Transverse colon (tissue), 4 donors: ENCODE measurements at regions of chr12 and their contacts with region 1.

Region 1: DNA sequence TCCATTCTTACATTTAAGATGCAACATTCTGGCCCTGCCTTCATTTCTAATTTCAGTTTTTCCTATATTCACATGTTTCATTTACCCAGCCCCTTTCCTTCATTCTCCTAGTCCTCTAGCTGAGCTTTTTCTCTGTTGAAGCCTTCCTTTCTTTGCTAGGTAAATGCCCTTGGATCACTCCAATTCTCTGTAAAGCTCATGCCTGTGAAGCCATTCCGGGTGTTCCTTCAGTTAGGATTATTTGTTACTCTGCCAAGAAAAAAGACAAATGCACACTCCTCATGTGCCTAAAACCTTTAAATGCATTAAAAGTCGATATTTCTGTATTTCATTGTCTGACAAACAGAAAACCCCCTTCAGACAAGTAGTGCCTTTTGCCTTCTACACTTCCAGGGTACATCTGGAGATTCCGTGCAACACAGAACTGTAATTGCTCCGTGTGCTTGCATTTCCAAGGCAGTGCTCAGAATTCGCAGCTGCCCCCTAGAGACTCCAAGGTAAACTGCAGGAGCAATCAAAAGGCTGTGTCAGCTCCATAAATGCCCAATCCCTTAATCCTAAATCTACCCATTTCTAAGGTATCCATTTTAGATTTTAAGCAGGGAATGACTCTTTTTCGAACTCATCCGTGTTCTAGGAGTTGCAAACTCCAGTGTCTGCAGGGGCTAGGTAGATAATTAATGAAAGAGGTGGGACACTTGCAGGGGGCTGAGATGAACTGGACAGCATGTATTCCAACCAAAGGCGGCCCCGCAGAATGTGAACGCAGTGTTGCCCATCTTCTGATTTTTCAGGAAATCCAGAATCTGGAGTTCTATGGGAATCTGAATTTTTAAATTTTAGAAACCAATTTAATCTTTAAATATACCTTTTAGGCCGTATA is 320.2 kb downstream of the GRIN2B start:
- DNase-seq: peak; percentile 54
- H3K4me3 ChIP-seq: no peak overlapping the region
- H3K27ac ChIP-seq: no peak overlapping the region
- H3K4me1 ChIP-seq: peaks cover 0 to 7% (median 0%) of the 10 kb centered on the region in 4 donors
- H3K27me3 ChIP-seq: no peaks in the 10 kb centered on the region
- CTCF ChIP-seq: peak; percentile 79 to 88 (median 83)
- EP300 ChIP-seq: no peak
- POLR2A ChIP-seq: no peak

Region 2: DNA sequence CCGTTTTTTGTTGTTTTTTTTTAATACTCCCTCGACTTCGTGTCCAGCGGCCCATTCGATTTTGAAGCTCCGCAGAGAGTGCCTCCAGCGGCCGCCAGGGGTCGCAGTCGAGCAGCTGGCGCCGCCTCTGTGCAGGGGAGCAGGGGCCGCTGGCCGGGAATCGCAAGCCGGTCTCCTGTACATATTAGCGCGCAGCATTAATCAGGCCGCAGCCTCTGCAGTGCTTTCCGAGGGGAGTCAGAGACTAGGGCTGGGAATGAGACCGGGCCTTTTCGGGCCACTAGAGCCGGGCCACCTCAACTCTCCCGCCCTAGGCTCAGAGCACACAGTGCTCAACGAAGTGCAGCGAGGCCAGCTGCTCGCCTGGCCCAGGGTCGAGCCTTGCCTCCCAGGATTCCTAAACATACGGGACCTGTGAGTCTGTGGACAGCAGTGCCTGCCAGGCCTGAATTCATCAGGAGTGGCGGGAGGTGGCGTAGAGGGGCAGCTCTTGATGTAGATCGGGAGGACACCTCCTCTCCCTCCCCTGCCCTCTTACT is 382.9 kb before region 1 on chr12:
- in situ Hi-C with region 1: loop called in 3 of 4 experiments (anchors 10 to 25 kb)
- intact Hi-C with region 1: loop called (anchors 5 kb)
- DNase-seq: peak; percentile 73
- H3K4me3 ChIP-seq: no peak overlapping the region
- H3K27ac ChIP-seq: no peak overlapping the region
- H3K4me1 ChIP-seq: peaks cover 0 to 8% (median 2%) of the 10 kb centered on the region in 4 donors
- H3K27me3 ChIP-seq: peaks cover 15% of the 10 kb centered on the region
- CTCF ChIP-seq: peak; percentile 92 to 100 (median 98)
- EP300 ChIP-seq: no peak
- POLR2A ChIP-seq: no peak